ENCODE measurements at regions of chr7 and their contacts with region 1.

Region 1: GRCh38 chr7:102279537-102280400 is 6.9 kb upstream of the SH2B2 start:
- DNase-seq: peak; percentile 55
- ATAC-seq: peak; percentile 80 to 89

Region 2: DNA sequence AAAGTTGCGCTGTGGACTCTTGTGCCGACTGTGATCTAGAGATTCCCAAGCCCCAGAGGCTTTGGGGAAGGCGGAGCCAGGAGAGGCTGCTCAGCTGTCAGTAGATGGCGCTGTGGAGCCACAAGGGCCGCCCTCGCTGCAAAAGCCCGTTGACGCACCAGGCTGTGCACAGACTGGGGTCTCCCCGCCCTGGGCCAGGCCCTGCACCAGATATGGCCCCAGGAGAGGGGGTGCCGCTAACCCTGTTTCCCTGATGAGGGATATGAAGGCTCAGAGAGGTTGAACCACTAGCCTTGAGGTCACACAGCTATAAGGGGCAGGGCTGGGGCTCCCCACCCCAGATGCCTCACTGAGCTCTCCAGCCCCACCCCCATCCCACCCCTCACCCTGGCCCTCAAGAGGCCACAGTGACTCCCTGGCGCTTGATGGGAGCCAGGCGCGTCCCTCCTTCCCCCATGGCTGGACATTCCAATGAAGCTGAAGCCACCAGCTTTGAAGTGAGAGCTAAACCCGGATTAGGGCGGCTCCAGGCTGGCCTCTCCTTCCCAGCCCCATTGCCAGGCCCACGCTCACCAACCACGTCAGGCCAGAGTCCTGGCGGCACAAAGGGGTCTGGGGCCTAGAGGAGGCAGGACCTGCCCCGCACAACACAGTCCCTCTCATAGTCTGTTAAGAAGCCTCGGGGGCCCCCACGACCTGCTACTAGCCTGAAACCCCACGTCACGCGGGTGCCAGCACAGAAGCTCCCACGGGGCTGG is 677.1 kb before region 1 on chr7:
- intact Hi-C with region 1: loop called in 1 of 2 experiments (anchors 10 kb)
- DNase-seq: peak; percentile 83
- ATAC-seq: peak; percentile 87 to 94

Region 3: DNA sequence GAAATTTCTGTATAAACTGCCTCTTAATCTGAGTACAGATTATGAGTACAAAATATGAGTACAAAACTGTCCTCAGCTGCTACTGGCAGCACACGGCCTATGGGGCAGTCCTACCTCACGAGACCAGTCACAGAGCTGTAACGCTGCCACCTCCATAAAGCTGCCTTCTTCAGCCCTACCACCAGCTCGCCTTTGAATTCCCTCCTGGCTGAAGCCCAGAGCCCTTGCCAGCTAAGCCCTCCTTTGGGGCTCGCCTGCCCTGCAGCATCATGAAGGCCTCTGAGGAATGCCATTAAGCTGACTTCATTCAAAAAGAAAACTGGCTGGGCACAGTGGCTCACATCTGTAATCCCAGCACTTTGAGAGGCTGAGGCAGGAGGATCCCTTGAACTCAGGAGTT is 173.1 kb before region 1 on chr7:
- intact Hi-C with region 1: no loop called
- DNase-seq: no peak
- ATAC-seq: peak in 1 of 2 donors; percentile 65

Region 4: GRCh38 chr7:102390697-102391484 is 111.1 kb after region 1 on chr7:
- intact Hi-C with region 1: loop called (anchors 1 to 5 kb)
- DNase-seq: peak; percentile 85
- ATAC-seq: peak; percentile 84 to 86